ENCODE measurements at regions of chr1 and their contacts with region 1.

Region 1: DNA sequence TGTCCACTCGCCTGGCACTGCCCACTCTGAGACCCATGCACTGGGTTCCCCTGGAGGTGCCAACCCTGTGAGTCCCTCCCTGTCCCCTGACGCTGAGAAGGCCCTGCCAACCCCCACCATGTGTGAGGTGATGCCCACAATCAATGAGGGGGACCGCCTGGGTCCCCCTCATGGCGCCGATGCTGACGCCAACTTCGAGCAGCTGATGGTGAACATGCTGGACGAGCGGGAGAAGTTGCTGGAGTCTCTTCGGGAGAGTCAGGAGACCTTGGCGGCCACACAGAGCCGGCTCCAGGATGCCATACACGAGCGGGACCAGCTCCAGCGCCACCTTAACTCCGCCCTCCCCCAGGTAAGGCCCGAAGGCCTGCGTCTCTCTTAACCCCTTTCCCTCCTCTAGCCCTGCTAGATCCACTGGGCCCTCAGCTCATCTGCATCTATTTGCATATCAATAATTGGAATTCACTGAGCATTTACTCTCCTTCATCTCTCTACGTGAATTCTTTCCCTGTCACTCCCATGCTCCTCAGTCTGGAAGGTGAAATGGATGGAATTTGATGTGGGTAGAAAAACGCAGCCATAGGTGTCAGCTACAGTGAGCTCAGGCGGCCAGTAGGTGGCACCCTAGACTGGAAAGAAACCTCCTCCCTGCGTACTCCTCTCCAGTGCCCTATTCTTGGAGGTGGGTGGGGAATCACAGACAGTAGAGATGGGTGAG is 12.8 kb downstream of the PPFIA4 start:
- DNase-seq: peak; percentile 68 to 86
- ATAC-seq: peak; percentile 71 to 93
- H3K4me3 ChIP-seq: no peak overlapping the region
- H3K27ac ChIP-seq: peak overlapping the region in 1 of 2 experiments; percentile 40; a peak in 2 of 6 replicates
- H3K4me1 ChIP-seq: peaks cover 15% of the 10 kb centered on the region; the same call in 2 of the 3 replicates
- CTCF ChIP-seq: peak; percentile 87
- EP300 ChIP-seq: no peak
- POLR2A ChIP-seq: no peak
- RAD21 ChIP-seq: peak; percentile 89 to 91

Region 2: GRCh38 chr1:203084588-203085502 is 45.8 kb after region 1 on chr1:
- CTCF ChIA-PET with region 1: interaction called, 28 read pairs
- POLR2A ChIA-PET with region 1: no interaction called
- DNase-seq: peak in 1 of 2 experiments; percentile 39
- ATAC-seq: peak in 1 of 2 experiments; percentile 66; a peak in 3 of 6 replicates
- H3K4me3 ChIP-seq: no peak overlapping the region
- H3K27ac ChIP-seq: no peak overlapping the region
- H3K4me1 ChIP-seq: 0 out of 3 replicates have a peak, but pooled peaks cover 7% of the 10 kb centered on the region
- CTCF ChIP-seq: peak; percentile 26; the same call in 2 of the 3 replicates
- EP300 ChIP-seq: no peak
- POLR2A ChIP-seq: no peak
- RAD21 ChIP-seq: peak in 1 of 2 experiments; percentile 23; a peak in 2 of 5 replicates

Region 3: DNA sequence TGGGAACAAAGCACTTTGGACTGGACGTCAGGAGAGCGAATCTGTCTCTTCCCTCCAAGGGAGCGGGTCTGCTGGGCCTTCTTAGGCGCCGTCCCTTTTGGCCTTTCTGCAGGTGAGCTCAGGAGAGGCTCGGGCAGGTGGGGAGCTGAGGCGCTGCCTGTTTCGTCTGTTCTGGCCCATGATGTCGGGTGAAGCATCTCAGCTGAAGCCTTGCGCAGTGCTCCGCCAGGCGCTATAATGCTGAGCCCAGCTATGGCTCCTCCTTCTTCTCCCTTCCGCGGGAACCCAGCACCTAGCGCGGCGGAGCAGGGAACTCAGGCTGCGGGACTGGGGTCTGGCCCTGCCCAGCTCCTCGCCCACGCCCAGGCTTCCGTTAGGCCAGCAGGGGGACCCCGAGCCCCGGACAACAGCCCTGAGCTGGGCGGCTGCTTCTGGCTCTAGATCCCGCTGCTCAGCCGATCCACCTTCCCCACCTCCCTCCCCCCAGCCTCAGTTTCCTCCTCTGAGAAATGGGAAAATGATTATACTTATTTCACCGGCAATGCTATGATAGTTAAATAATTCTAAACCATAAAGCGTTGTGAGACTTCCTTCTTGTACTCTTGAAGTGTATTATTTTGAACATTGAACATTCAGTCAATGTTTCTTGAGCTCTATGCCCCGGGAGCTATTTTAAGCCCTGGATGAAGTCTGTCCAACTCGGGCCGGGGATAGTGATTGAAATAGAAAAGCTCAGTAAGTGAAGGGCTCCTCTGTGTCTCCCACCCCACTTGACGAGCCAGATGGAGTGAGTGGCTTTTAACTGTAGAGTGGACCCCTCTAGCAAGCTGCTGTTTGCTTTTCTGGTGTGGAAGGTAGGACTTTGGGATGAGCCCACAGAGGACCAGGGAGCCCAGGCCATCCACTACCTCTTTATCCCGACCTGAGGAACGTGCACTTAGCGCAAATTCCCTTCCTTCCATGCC is 78.8 kb after region 1 on chr1:
- CTCF ChIA-PET with region 1: interaction called, 48 read pairs
- POLR2A ChIA-PET with region 1: no interaction called
- DNase-seq: peak; percentile 63 to 93
- ATAC-seq: peak; percentile 91 to 99
- H3K4me3 ChIP-seq: no peak overlapping the region
- H3K27ac ChIP-seq: no peak overlapping the region
- H3K4me1 ChIP-seq: 0 out of 3 replicates have a peak, but pooled peaks cover 4% of the 10 kb centered on the region
- CTCF ChIP-seq: peak; percentile 81
- EP300 ChIP-seq: no peak
- POLR2A ChIP-seq: no peak
- RAD21 ChIP-seq: peak; percentile 87 to 94

Region 4: DNA sequence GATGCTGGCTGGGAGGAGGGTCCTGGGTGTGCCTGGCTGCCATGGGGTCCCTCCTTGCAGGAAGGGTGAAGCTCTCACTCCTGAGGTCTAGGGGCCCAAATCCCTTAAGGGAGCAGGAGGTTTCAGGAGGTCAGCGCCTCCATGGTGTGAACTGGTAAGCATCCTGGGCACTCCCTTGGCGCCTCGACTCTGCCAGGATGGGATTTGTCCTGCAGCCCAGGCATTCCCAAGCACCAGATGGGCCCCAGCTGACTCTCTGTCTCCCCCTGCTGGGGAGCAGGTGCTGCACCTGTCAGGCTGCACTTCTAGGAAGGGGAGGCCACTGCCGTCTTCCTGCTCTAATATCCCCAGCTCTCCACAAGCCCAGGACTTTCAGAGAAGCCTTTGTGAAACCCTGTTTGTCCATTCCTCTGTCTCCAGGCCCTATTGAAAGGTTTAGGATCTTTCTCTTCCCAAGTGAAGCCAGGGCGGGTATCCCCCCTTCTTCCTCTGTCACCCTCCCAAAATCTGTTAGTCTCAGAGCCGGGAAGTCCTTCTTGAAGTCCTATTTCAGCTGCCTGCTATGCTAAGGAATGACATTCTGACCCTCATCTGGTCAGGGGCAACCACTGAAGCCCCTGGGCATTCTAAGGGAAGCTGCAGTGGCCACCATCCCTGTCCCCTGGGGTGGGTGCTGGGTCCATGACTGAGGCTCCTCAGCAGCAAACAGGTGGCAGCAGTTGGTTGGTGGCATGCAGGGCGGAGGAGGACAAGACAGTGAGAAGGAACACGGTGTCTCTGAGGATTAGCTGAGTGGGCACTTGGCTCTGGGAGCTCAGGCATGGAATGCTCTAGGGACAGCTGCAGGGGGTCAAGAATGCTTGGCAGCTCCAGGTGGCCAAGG is 133.3 kb after region 1 on chr1:
- CTCF ChIA-PET with region 1: interaction called, 188 read pairs
- POLR2A ChIA-PET with region 1: no interaction called
- DNase-seq: peak; percentile 67 to 78
- ATAC-seq: peak; percentile 67 to 93
- H3K4me3 ChIP-seq: no peak overlapping the region
- H3K27ac ChIP-seq: no peak overlapping the region
- H3K4me1 ChIP-seq: peaks cover 18% of the 10 kb centered on the region
- CTCF ChIP-seq: peak; percentile 78
- EP300 ChIP-seq: no peak
- POLR2A ChIP-seq: no peak
- RAD21 ChIP-seq: peak; percentile 61 to 68

Region 5: DNA sequence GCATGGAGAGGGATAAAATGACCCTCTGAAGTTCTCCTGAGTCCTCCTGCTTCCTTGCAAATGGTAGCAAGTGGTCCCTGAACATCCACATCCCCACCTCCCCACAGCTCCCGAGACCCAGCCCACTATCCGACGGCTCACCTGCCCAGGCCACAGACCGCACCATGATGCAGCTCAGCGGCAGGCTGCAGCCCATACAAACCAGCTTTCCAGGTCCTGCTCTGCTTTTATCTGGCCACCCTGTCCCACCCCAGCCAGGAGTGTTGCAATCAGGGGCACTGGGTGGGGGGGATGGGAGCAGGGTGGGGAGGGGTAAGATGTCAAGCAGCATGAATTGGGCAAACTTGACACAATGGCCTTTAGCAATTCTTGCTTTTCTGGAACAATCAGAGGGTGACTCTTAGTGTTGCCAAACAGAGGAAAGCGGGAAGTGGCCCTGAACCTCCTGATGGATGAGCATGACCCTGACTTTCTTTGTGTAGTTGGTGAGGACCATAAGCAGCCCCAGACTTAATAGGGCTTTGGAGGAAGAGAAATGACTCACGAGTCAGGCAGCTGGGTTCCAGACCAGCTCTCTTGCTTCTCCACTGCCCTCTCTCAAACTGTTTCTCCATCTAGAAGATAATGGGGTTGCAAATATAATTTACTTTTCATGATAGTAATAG is 190.6 kb after region 1 on chr1 and contains the start of gene CHIT1:
- CTCF ChIA-PET with region 1: interaction called, 21 read pairs
- POLR2A ChIA-PET with region 1: no interaction called
- DNase-seq: no peak
- ATAC-seq: no peak
- H3K4me3 ChIP-seq: no peak within 1 kb of the TSS
- H3K27ac ChIP-seq: no peak within 1 kb of the TSS
- H3K4me1 ChIP-seq: no peaks in the 10 kb centered on the region
- CTCF ChIP-seq: no peak
- EP300 ChIP-seq: no peak
- POLR2A ChIP-seq: no peak
- RAD21 ChIP-seq: no peak
- polyA plus RNA-seq, gene CHIT1: not detected in 2 replicates

Measured in A549 (cell line).